ENCODE measurements at regions of chr18 and their contacts with region 1.

Region 1: GRCh38 chr18:63320046-63320689 is 599 bp upstream of the BCL2 start:
- DNase-seq: peak; percentile 88
- H3K4me3 Mint-ChIP-seq: peak overlapping the region; percentile 81
- H3K27ac Mint-ChIP-seq: peak overlapping the region; percentile 90
- H3K4me1 Mint-ChIP-seq: peaks cover 24% of the 10 kb centered on the region
- H3K27me3 Mint-ChIP-seq: no peaks in the 10 kb centered on the region

Region 2: DNA sequence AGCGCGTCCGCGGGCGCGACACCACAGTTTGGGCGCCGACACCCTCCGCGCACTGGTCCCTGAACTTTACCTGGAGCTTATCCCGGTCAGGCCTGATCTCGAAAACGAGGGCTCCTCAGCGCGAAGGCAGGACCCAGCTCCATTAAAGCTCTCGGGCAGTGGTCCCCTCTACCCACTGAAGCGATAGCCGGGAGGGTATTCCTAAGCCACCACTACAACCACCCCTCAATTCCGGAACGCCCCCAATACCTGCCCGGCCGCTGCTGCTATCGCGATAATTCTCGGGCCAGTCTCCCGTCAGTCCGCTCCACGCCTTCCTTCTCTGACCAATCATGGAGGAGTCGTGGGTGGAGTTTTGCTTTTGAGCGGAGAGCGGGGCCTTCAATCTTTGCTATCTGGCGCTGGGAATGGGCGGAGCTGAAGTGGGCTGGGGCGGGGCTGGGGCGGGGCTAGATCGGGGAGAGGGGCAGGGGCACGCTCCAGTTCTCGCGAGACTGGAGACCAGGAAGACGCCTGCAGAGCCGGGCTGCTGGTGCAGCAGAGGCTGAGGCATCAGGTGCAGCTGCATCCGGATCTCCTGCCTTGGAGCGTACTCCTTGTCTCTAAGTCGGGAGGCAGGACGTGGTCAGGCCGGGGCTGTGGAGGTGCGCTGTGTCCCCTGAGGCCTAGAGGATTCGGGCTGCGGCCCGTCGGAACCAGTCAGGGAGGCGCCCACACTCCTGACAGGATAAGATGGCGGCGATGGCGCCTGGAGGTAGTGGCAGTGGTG is 1133.2 kb before region 1 on chr18 and contains the starts of genes PIGN and RELCH:
- CTCF ChIA-PET with region 1: no interaction called
- intact Hi-C with region 1: loop called (anchors 2 kb)
- DNase-seq: peak; percentile 97
- H3K4me3 Mint-ChIP-seq: peak within 1 kb of the TSS; percentile 99
- H3K27ac Mint-ChIP-seq: peak within 1 kb of the TSS; percentile 90
- H3K4me1 Mint-ChIP-seq: peaks cover 45% of the 10 kb centered on the region
- H3K27me3 Mint-ChIP-seq: no peaks in the 10 kb centered on the region
- total RNA-seq, gene PIGN: 21.2 to 22.6 TPM
- total RNA-seq, gene RELCH: 15.7 to 16.3 TPM

Region 3: DNA sequence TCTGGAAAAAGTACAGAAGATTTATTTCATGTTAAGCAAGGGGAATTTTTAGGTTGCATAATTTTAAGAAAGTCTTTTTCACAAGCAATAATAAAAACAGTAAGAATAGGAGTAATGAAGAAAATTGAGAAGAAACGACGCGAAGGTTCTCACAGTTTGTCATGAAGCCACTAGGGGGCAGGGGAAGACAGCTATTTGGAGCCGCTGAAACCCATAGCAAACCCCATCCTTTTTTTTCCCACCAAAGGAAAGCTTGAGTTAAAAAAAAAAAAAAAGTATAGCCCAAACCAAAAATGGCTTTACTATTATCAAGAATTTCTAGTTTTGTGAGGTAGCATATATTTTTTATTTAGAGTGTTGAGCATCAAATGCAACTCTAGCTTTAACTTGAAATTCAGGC is 303.9 kb before region 1 on chr18:
- CTCF ChIA-PET with region 1: interaction called, 159 read pairs
- intact Hi-C with region 1: loop called (anchors 1 kb)
- DNase-seq: peak; percentile 68
- H3K4me3 Mint-ChIP-seq: no peak overlapping the region
- H3K27ac Mint-ChIP-seq: no peak overlapping the region
- H3K4me1 Mint-ChIP-seq: no peaks in the 10 kb centered on the region
- H3K27me3 Mint-ChIP-seq: no peaks in the 10 kb centered on the region

Region 4: GRCh38 chr18:63131106-63131958 is 188.8 kb before region 1 on chr18:
- CTCF ChIA-PET with region 1: interaction called, 54 read pairs
- intact Hi-C with region 1: loop called (anchors 1 kb)
- DNase-seq: peak; percentile 79
- H3K4me3 Mint-ChIP-seq: no peak overlapping the region
- H3K27ac Mint-ChIP-seq: peak overlapping the region; percentile 75
- H3K4me1 Mint-ChIP-seq: peaks cover 37% of the 10 kb centered on the region
- H3K27me3 Mint-ChIP-seq: no peaks in the 10 kb centered on the region

Region 5: GRCh38 chr18:63199743-63200241 is 120.4 kb before region 1 on chr18:
- CTCF ChIA-PET with region 1: interaction called, 11 read pairs
- intact Hi-C with region 1: loop called (anchors 1 kb)
- DNase-seq: peak; percentile 54
- H3K4me3 Mint-ChIP-seq: no peak overlapping the region
- H3K27ac Mint-ChIP-seq: no peak overlapping the region
- H3K4me1 Mint-ChIP-seq: peaks cover 30% of the 10 kb centered on the region
- H3K27me3 Mint-ChIP-seq: no peaks in the 10 kb centered on the region

Region 6: DNA sequence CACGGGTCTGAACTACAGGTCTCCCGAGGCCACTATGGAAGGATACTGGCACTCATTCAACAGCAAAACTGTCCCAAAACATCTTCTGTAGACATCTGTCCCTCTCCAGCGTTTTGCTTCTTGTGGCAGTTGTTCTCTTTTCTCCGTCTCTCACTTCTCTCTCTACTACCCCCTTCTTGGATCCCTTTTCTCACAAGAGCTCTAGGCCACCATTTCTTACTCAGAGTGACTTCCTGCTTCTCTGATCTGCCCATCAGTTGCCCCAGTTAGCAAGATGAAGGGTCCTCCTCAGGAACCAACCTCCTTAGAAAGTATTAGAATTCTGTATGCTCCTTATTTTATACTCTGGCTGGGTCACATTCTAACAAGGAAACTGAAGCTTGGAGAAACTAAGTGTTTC is 33.2 kb before region 1 on chr18:
- CTCF ChIA-PET with region 1: interaction called, 7 read pairs
- intact Hi-C with region 1: loop called (anchors 1 kb)
- DNase-seq: no peak
- H3K4me3 Mint-ChIP-seq: no peak overlapping the region
- H3K27ac Mint-ChIP-seq: no peak overlapping the region
- H3K4me1 Mint-ChIP-seq: peaks cover 17% of the 10 kb centered on the region
- H3K27me3 Mint-ChIP-seq: no peaks in the 10 kb centered on the region

Region 7: DNA sequence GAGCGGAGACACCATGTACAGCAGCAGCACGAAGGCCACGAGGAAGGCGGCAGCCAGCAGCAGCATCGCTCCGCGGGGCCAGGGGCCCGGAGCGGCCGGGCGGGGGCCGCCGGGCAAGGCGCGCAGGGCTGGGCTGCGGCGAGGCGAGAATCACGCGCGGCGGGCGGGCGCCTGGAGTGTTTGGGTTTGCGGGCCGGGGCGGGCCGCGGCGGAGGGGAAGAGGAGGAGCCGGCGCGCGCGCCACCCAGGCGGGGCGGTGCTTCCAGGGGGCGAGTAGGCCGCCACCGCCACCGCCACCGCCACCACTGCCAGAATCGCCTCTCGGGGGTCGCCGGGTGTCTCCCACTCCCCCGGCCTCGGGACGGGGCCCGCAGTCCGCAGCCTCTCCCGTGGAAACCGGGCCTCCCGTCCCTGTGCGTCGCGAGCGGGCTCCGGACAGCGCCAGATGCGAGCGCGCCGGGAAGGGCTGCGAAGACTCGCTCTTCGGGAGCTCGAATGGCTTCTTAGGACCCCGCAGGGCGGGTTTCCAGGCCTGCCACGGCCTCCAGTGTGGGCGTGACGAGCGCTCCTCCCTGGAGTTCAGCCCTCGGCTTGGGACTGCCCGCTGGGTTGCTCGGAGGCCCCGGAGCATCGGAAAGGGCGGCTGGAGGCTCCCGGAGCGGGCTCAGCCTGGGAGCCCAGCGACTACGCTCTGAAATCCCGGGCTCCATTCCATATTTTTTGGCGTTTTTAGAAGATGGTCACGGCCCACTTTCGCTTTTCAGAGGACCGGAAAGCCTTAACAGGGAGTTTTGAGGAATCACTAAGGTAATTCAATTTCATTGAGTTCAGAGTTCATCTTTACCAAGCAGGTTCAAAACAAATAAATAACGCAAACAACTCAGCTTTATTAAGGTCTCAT is 47.1 kb after region 1 on chr18 and contains the start of gene KDSR:
- CTCF ChIA-PET with region 1: interaction called, 3 read pairs
- intact Hi-C with region 1: loop called (anchors 1 kb)
- DNase-seq: peak; percentile 85
- H3K4me3 Mint-ChIP-seq: peak within 1 kb of the TSS; percentile 84
- H3K27ac Mint-ChIP-seq: peak within 1 kb of the TSS; percentile 79
- H3K4me1 Mint-ChIP-seq: peaks cover 26% of the 10 kb centered on the region
- H3K27me3 Mint-ChIP-seq: no peaks in the 10 kb centered on the region
- total RNA-seq, gene KDSR: 75.2 to 81.5 TPM

Region 8: DNA sequence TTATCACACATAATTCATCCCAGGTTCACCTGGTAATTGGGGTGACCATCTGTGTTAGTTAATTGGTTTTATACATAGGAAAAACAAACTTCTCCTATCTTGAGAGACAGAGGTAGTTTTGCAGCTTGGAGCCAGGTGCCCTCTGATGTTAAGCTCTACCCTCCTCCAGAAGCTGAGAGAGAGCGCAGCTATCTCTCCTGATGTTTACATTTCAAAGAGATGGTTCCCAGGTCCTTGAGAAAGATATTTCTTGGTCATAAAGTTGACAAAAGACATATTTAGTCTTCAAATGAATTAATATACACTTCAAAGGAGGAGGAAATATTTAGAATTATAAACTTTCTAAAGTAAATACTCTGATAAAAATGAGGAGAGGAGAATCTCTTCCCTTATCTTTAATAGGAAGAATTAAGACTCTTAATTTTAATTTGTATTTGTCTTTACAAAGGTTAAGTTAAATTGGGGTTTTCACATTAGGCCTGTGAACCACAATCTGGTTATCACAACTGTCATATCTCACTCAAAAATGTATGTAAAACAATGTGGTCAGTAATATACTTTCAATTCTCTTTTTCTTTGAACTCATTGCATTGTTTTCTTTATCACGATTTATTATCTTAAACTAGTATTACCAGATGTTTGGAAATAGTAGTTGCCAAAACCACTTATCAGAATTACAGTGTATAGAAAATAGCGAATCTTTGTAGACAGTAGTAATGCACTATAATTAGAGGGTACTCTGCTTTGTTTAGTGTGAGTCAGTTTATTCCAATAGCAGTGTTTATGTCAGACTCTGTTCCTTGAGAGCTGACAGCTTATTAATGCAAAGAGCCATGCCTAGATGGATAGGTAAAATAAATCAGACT is 297.1 kb after region 1 on chr18:
- CTCF ChIA-PET with region 1: no interaction called
- intact Hi-C with region 1: no loop called
- DNase-seq: no peak
- H3K4me3 Mint-ChIP-seq: no peak overlapping the region
- H3K27ac Mint-ChIP-seq: no peak overlapping the region
- H3K4me1 Mint-ChIP-seq: no peaks in the 10 kb centered on the region
- H3K27me3 Mint-ChIP-seq: no peaks in the 10 kb centered on the region

Measured in activated naive CD4-positive, alpha-beta T cell treated with anti-CD3 and anti-CD28 coated beads for 36 hours (primary cell).